ENCODE measurements at regions of chr6 and their contacts with region 1.

Region 1: GRCh38 chr6:141105481-141105880 is 1027.2 kb upstream of the GJE1 start:
- DNase-seq: no peak
- H3K4me3 ChIP-seq: no peak overlapping the region
- H3K27ac ChIP-seq: no peak overlapping the region
- H3K4me1 ChIP-seq: no peaks in the 10 kb centered on the region
- H3K27me3 ChIP-seq: no peaks in the 10 kb centered on the region
- CTCF ChIP-seq: no peak
- POLR2A ChIP-seq: no peak

Region 2: GRCh38 chr6:140650115-140650514 is 455.4 kb before region 1 on chr6:
- intact Hi-C with region 1: no loop called
- DNase-seq: no peak
- H3K4me3 ChIP-seq: no peak overlapping the region
- H3K27ac ChIP-seq: no peak overlapping the region
- H3K4me1 ChIP-seq: no peaks in the 10 kb centered on the region
- H3K27me3 ChIP-seq: no peaks in the 10 kb centered on the region
- CTCF ChIP-seq: no peak
- POLR2A ChIP-seq: no peak

Region 3: GRCh38 chr6:141056945-141057625 is 48.4 kb before region 1 on chr6:
- intact Hi-C with region 1: loop called (anchors 2 kb)
- DNase-seq: no peak
- H3K4me3 ChIP-seq: no peak overlapping the region
- H3K27ac ChIP-seq: no peak overlapping the region
- H3K4me1 ChIP-seq: no peaks in the 10 kb centered on the region
- H3K27me3 ChIP-seq: no peaks in the 10 kb centered on the region
- CTCF ChIP-seq: no peak
- POLR2A ChIP-seq: no peak

Region 4: GRCh38 chr6:141539617-141540016 is 434.1 kb after region 1 on chr6:
- intact Hi-C with region 1: loop called (anchors 10 kb)
- DNase-seq: no peak
- H3K4me3 ChIP-seq: no peak overlapping the region
- H3K27ac ChIP-seq: no peak overlapping the region
- H3K4me1 ChIP-seq: no peaks in the 10 kb centered on the region
- H3K27me3 ChIP-seq: no peaks in the 10 kb centered on the region
- CTCF ChIP-seq: no peak
- POLR2A ChIP-seq: no peak